PC-3 (cell line): ENCODE measurements at regions of chr10 and their contacts with region 1.

Region 1: GRCh38 chr10:34637418-34637911 is 177.6 kb downstream of the PARD3 start:
- DNase-seq: peak; percentile 91
- ATAC-seq: peak; percentile 48
- H3K4me3 ChIP-seq: no peak overlapping the region
- H3K27ac ChIP-seq: no peak overlapping the region
- H3K4me1 ChIP-seq: peaks cover 18% of the 10 kb centered on the region
- H3K27me3 ChIP-seq: no peaks in the 10 kb centered on the region
- CTCF ChIP-seq: peak; percentile 100

Region 2: GRCh38 chr10:34139559-34139958 is 497.9 kb before region 1 on chr10:
- CTCF ChIA-PET with region 1: no interaction called
- POLR2A ChIA-PET with region 1: no interaction called
- intact Hi-C with region 1: loop called (anchors 1 kb)
- DNase-seq: peak; percentile 42
- ATAC-seq: no peak
- H3K4me3 ChIP-seq: no peak overlapping the region
- H3K27ac ChIP-seq: no peak overlapping the region
- H3K4me1 ChIP-seq: peaks cover 23% of the 10 kb centered on the region
- H3K27me3 ChIP-seq: no peaks in the 10 kb centered on the region
- CTCF ChIP-seq: no peak

Region 3: GRCh38 chr10:34254596-34254995 is 382.9 kb before region 1 on chr10:
- CTCF ChIA-PET with region 1: interaction called, 3 read pairs
- POLR2A ChIA-PET with region 1: no interaction called
- intact Hi-C with region 1: loop called (anchors 1 kb)
- DNase-seq: peak; percentile 100
- ATAC-seq: peak; percentile 89
- H3K4me3 ChIP-seq: no peak overlapping the region
- H3K27ac ChIP-seq: peak overlapping the region; percentile 3
- H3K4me1 ChIP-seq: peaks cover 28% of the 10 kb centered on the region
- H3K27me3 ChIP-seq: no peaks in the 10 kb centered on the region
- CTCF ChIP-seq: no peak

Region 4: DNA sequence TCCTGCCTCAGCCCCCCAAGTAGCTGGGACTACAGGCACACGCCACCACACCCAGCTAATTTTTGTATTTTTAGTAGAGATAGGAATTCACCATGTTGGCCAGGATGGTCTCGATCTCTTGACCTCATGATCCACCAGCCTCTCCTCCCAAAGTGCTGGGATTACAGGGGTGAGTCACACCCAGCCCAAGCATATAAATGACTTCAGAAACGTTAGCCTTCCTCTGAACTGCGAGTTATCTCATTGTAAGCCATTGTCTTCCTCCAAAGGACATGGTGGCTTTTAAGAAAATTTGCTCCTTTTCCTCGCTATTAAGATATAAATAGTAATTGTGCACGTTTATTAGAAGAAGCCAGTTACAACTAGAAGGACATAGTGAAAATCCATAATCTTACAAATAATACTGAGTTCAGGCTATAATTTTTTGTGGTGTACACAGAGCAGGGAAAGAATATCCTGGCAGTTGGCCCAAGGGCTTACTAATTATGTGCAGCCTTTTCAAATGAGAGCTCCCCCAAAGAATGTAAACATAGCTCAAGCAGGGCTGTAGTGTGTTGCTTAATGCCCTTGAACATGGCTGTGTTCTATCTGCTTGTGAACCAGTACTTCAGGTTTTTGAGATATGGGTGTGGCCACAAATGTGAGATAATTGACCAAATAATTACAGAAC is 318.1 kb before region 1 on chr10:
- CTCF ChIA-PET with region 1: interaction called, 9 read pairs
- POLR2A ChIA-PET with region 1: no interaction called
- intact Hi-C with region 1: loop called (anchors 1 kb)
- DNase-seq: peak; percentile 100
- ATAC-seq: peak; percentile 95
- H3K4me3 ChIP-seq: no peak overlapping the region
- H3K27ac ChIP-seq: peak overlapping the region; percentile 41
- H3K4me1 ChIP-seq: peaks cover 34% of the 10 kb centered on the region
- H3K27me3 ChIP-seq: no peaks in the 10 kb centered on the region
- CTCF ChIP-seq: no peak

Region 5: DNA sequence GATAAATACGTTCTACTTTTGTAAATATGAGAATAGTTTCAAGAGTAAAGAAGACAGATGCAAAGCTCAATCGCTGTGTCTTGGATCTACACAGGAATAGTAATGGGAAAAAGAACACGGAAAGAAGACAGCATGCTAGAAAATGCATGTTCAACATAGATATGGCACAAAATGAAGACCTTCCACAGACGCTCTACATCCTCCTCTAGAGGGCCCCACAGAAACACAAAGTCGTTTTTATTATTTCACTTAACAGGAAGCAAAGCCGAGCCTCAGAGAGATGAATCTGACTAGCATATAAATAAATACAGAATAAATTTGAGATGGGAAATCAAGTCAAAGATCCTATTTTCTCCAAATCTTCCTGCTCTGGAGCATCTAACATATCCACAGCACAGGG is 114.9 kb before region 1 on chr10:
- CTCF ChIA-PET with region 1: interaction called, 13 read pairs
- POLR2A ChIA-PET with region 1: interaction called, 7 read pairs
- intact Hi-C with region 1: loop called (anchors 1 kb)
- DNase-seq: peak; percentile 92
- ATAC-seq: no peak
- H3K4me3 ChIP-seq: no peak overlapping the region
- H3K27ac ChIP-seq: peak overlapping the region; percentile 84
- H3K4me1 ChIP-seq: peaks cover 77% of the 10 kb centered on the region
- H3K27me3 ChIP-seq: no peaks in the 10 kb centered on the region
- CTCF ChIP-seq: peak; percentile 99